Mammary epithelial cell (primary cell): ENCODE measurements at regions of chr1 and their contacts with region 1.

Region 1: GRCh38 chr1:151594143-151594625 is 17.7 kb upstream of the SNX27 start:
- DNase-seq: peak; percentile 61
- H3K4me3 ChIP-seq: no peak overlapping the region
- H3K27ac ChIP-seq: no peak overlapping the region
- H3K4me1 ChIP-seq: no peaks in the 10 kb centered on the region
- H3K27me3 ChIP-seq: no peaks in the 10 kb centered on the region
- CTCF ChIP-seq: peak; percentile 93 to 98

Region 2: DNA sequence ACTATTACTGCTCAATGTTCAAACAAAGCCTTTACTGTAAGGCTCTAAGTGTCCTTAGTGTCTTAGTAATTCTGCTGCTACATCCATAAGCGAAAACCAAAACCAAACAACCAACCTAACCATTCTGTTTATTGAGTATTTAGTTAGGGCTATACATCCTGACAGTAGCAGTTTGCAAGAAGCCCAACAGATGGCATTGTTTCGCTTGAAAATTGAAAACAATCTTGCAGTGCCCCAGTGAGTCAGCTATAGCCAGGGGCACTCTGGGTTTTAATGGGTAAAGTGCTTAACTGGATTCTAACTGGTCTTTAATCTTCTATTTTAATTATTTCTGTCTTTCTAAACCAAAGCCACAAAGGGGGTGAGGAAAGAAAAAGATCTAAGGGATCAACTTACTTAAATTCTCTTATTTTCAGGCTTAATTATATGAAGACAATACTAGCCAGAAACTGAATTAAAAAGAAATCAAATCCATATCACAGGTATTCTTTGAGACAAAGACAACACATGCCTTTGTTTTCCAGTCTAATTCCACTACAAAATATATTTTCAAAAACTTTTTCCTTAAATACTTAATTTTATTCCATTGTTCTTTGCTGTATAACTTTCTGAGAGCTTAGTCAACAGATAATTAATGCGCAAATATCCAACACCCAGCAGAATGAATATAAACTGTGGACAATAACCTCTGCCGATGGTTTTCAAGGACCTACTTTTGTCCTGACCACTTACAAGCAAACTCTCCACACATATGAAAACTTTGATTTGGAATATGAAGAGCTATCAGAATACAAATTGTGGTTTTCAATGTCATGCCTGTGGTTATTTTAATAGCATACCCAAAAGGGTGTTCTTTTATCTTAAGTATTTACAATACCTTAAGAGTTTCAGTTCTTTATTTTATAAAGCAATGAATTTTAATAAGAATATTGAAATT is 150.1 kb before region 1 on chr1:
- CTCF ChIA-PET with region 1: no interaction called
- dilution Hi-C with region 1: no loop called
- in situ Hi-C with region 1: no loop called
- intact Hi-C with region 1: loop called (anchors 1 kb)
- DNase-seq: peak; percentile 77
- H3K4me3 ChIP-seq: no peak overlapping the region
- H3K27ac ChIP-seq: no peak overlapping the region
- H3K4me1 ChIP-seq: peaks cover 10% of the 10 kb centered on the region
- H3K27me3 ChIP-seq: no peaks in the 10 kb centered on the region
- CTCF ChIP-seq: peak; percentile 77 to 85

Region 3: GRCh38 chr1:151502923-151503780 is 91.0 kb before region 1 on chr1:
- CTCF ChIA-PET with region 1: no interaction called
- dilution Hi-C with region 1: loop called (anchors 5 kb)
- in situ Hi-C with region 1: no loop called
- intact Hi-C with region 1: no loop called
- DNase-seq: no peak
- H3K4me3 ChIP-seq: no peak overlapping the region
- H3K27ac ChIP-seq: no peak overlapping the region
- H3K4me1 ChIP-seq: peaks cover 9% of the 10 kb centered on the region
- H3K27me3 ChIP-seq: no peaks in the 10 kb centered on the region
- CTCF ChIP-seq: no peak

Region 4: DNA sequence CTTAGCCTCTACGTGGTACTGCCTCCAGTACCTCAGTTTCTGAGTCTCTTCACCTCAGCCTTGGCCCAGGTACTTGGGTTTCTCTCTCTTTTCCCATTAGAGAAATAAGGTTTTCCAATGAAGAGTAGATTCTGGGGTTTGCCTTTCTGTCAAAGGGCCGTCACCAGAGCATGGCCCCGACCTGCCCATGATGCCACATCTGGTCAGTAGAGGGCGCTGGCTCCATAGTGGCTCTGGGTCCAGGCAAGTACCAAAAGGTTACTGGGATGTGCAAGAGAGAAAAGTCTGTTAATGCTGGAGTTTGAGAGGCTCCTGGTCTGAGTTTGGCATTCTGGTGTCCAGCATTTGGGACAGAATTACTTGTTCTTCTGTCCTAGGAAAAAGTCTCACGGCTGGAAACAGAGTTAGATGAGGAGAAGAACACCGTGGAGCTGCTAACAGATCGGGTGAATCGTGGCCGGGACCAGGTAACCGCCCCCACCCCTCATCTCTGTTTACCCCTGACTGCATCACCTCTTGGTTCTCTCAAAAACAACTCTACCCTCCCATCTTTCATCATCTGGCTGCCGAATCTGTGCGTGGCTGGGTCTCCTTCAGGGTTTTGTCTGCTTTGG is 59.4 kb before region 1 on chr1:
- CTCF ChIA-PET with region 1: no interaction called
- dilution Hi-C with region 1: no loop called
- in situ Hi-C with region 1: no loop called
- intact Hi-C with region 1: loop called (anchors 1 kb)
- DNase-seq: peak; percentile 57
- H3K4me3 ChIP-seq: no peak overlapping the region
- H3K27ac ChIP-seq: no peak overlapping the region
- H3K4me1 ChIP-seq: peaks cover 16% of the 10 kb centered on the region
- H3K27me3 ChIP-seq: no peaks in the 10 kb centered on the region
- CTCF ChIP-seq: peak; percentile 95 to 98

Region 5: DNA sequence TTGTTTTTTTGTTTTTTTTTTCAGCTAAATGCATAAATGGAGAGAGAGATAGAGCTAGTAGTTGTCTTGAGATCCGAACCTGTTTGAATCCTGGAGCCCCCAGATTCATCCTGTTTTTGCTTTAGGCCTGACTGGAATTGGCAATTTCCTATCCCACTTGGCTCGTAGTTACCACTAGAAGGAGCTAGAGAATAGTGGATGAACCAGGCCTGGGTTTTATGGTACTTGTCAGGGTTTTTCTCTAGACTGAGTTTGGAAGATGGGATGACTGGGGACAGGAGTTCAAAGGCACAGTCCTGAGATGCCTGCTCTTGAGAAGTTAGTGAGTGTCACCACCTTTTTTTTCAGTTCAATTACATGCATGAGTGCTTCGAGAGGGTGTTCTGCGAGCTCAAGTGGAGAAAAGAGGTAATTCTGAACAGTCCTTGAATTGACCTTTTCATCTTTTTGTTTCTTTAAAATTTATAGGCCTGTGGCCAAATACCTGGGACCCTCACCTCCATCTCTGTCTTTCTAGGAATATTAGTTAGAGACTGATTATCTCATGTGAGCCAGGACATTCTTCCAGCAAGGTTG is 99.0 kb after region 1 on chr1:
- CTCF ChIA-PET with region 1: no interaction called
- dilution Hi-C with region 1: no loop called
- in situ Hi-C with region 1: no loop called
- intact Hi-C with region 1: loop called (anchors 1 kb)
- DNase-seq: peak; percentile 26
- H3K4me3 ChIP-seq: no peak overlapping the region
- H3K27ac ChIP-seq: no peak overlapping the region
- H3K4me1 ChIP-seq: no peaks in the 10 kb centered on the region
- H3K27me3 ChIP-seq: no peaks in the 10 kb centered on the region
- CTCF ChIP-seq: peak; percentile 72 to 79

Region 6: GRCh38 chr1:151710187-151710840 is 116.1 kb after region 1 on chr1:
- CTCF ChIA-PET with region 1: no interaction called
- dilution Hi-C with region 1: loop called (anchors 5 kb)
- in situ Hi-C with region 1: no loop called
- intact Hi-C with region 1: no loop called
- DNase-seq: no peak
- H3K4me3 ChIP-seq: no peak overlapping the region
- H3K27ac ChIP-seq: no peak overlapping the region
- H3K4me1 ChIP-seq: peaks cover 11% of the 10 kb centered on the region
- H3K27me3 ChIP-seq: no peaks in the 10 kb centered on the region
- CTCF ChIP-seq: no peak